ENCODE measurements at regions of chr16 and their contacts with region 1.

Region 1: GRCh38 chr16:53576904-53577303 is 73.9 kb upstream of the AKTIP start:
- DNase-seq: no peak
- ATAC-seq: no peak
- H3K4me3 ChIP-seq: no peak overlapping the region
- H3K4me3 Mint-ChIP-seq: no peak overlapping the region
- H3K27ac ChIP-seq: no peak overlapping the region
- H3K27ac Mint-ChIP-seq: no peak overlapping the region
- H3K4me1 ChIP-seq: no peaks in the 10 kb centered on the region
- H3K4me1 Mint-ChIP-seq: no peaks in the 10 kb centered on the region
- H3K27me3 ChIP-seq: no peaks in the 10 kb centered on the region
- H3K27me3 Mint-ChIP-seq: no peaks in the 10 kb centered on the region

Region 2: GRCh38 chr16:53952215-53953208 is 375.6 kb after region 1 on chr16:
- CTCF ChIA-PET with region 1: no interaction called
- POLR2A ChIA-PET with region 1: interaction called in 1 of 2 experiments, 21 read pairs
- DNase-seq: peak in 1 of 35 experiments; percentile 16
- ATAC-seq: peak in 3 of 4 experiments; percentile 40 to 72 (median 57)
- H3K4me3 ChIP-seq: peak overlapping the region in 1 of 2 donors; percentile 7
- H3K4me3 Mint-ChIP-seq: peak overlapping the region; percentile 62 to 69 (median 68)
- H3K27ac ChIP-seq: no peak overlapping the region
- H3K27ac Mint-ChIP-seq: peak overlapping the region; percentile 72 to 76
- H3K4me1 ChIP-seq: peaks cover 7 to 9% of the 10 kb centered on the region in 2 experiments
- H3K4me1 Mint-ChIP-seq: peaks cover 35 to 43% (median 39%) of the 10 kb centered on the region in 3 donors
- H3K27me3 ChIP-seq: no peaks in the 10 kb centered on the region
- H3K27me3 Mint-ChIP-seq: no peaks in the 10 kb centered on the region

Measured in T-cell (primary cell).